MCF 10A (cell line): ENCODE measurements at regions of chr2 and their contacts with region 1.

Region 1: GRCh38 chr2:100427628-100428258 is 10.3 kb upstream of the CHST10 start:
- DNase-seq: peak; percentile 69
- H3K4me3 Mint-ChIP-seq: no peak overlapping the region
- H3K27ac Mint-ChIP-seq: no peak overlapping the region
- H3K4me1 Mint-ChIP-seq: peaks cover 6% of the 10 kb centered on the region
- H3K27me3 Mint-ChIP-seq: peaks cover 62% of the 10 kb centered on the region
- CTCF ChIP-seq: peak; percentile 48

Region 2: DNA sequence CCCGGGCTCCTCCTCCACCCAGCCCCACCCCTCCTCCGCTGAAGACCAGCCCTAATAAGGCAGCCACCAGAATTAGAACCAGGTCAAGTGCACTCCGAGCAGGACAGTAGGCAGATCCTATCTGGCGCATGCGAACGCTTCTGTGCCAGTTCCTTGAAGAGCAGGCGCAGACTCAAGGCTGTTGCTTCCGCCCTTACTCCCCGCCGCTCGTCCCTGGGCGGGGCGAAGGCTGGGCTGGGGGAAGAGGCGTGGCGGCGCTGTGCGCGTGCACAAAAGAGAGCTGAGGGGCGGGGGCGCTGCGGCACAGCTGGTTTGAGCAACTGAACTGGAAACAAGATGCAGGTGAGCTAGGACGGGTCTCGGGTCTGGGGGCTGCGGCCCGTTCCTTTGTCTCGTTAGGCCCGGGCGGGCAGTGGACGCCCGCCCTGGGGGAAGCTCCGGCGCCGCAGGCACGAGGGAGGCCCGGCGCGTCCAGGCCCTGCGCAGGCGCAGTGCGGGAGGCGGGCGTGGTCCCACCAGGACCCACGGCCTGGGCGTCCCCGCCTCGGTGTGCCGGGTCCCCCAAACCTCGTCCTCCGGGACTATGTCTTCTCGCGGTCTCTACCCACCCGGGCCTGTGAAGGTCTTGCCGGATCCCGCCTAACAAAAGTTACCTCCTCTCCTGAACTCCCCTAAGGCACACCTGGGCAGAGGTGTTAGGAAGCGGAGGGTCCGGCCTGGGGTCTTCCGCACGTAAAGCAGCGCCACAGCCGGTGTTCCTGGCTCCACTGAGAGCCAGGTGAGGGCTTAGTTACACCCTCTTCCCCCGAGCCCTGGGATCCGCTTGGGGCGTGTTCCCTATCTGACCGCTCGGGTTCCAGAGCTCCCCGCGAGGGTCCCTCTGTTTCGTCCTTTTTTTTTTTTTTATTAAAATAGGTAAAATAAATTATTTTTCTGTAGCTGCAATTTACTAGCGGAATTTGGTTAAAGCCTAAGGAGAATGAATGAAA is 135.3 kb after region 1 on chr2 and contains the start of gene PDCL3:
- CTCF ChIA-PET with region 1: interaction called, 3 read pairs
- POLR2A ChIA-PET with region 1: no interaction called
- intact Hi-C with region 1: loop called (anchors 10 kb)
- DNase-seq: peak; percentile 99
- H3K4me3 Mint-ChIP-seq: peak within 1 kb of the TSS; percentile 81
- H3K27ac Mint-ChIP-seq: peak within 1 kb of the TSS; percentile 97
- H3K4me1 Mint-ChIP-seq: no peaks in the 10 kb centered on the region
- H3K27me3 Mint-ChIP-seq: no peaks in the 10 kb centered on the region
- CTCF ChIP-seq: no peak
- total RNA-seq, gene PDCL3: 24.2 and 27.1 TPM in 2 replicates

Region 3: DNA sequence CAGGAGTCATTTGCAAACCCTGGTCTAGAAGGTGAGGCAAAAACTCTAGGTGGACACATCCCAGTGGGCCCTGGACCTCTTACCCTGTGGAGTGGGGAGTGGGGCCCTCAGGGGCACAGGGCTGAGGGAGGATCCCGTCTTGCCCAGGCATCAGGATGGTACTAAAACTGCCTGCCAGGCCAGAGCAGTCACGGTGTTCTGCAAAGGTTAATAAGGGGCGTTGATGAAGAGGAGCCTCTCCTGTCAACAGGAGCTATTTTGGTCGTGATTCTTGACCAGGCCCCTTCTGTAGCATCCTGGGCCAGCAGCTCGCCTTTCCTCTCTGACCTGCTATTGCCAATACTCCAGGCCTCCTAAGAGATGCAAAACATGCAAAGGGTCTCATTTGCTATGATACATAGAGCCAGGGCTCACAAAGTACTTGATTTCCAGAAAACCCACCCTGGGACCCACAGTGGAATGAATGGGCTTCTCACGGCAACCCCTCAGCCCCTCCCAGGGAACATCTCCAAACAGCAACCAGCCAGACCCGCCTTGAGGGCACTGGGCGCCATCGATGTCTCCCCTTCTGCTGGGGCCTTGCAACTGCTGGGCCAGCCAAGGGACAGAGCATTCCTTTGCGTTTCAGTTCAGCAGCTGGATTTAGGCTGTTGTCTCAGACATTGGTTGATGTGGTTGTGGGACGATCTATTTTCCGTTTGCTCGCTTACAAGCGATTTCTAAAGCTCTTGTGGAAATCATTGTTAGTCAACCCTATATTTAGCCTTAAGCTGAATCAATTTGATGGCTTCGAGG is 246.1 kb after region 1 on chr2:
- CTCF ChIA-PET with region 1: no interaction called
- POLR2A ChIA-PET with region 1: no interaction called
- intact Hi-C with region 1: no loop called
- DNase-seq: no peak
- H3K4me3 Mint-ChIP-seq: no peak overlapping the region
- H3K27ac Mint-ChIP-seq: no peak overlapping the region
- H3K4me1 Mint-ChIP-seq: no peaks in the 10 kb centered on the region
- H3K27me3 Mint-ChIP-seq: peaks cover 20% of the 10 kb centered on the region
- CTCF ChIP-seq: no peak